RWPE1 (cell line): ENCODE measurements at regions of chr1 and their contacts with region 1.

Region 1: GRCh38 chr1:42576935-42577334 is 81.3 kb upstream of the PPIH start:
- DNase-seq: no peak
- H3K27ac ChIP-seq: no peak overlapping the region
- CTCF ChIP-seq: no peak

Region 2: DNA sequence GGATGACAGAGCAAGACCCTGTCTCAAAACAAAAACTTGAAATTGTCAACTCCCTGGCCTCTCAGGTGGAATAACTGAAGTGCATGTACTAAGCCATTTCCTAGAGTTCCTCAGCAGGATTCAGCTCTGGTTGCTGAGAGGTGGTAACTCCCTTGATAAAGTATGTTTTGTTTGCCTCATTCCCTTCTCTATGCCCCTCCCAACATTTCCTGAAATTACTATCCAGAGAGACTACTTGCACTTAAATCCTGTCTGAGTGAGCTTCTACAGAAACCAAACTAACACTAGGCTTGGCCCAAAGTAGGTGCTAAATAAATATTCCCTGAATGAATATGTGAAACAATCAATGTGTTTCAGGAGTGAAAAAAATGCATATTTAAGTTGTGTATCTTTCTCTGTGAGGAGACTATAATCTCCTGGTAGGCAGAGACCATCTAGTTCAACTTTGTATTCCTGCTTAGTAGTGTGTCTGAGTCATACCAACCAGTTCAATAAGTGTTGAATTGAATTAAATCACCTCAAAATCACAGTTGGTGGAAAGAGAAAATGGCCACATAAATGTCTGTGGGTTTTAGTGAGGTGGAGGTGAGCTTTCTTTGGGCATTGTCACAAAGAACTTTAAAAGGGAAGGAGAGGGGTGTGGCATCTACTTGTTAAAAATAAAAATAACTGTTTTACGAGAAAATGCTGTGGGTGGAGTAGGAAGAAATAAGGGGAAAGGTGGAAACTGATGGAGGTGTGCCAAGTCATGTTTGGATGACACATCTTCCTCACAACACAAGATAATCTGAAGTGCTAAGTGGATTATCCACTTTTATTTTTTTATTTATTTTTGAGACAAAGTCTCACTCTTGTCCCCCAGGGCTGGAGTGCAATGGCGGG is 183.7 kb before region 1 on chr1:
- CTCF ChIA-PET with region 1: no interaction called
- POLR2A ChIA-PET with region 1: no interaction called
- DNase-seq: no peak
- H3K27ac ChIP-seq: no peak overlapping the region
- CTCF ChIP-seq: no peak

Region 3: DNA sequence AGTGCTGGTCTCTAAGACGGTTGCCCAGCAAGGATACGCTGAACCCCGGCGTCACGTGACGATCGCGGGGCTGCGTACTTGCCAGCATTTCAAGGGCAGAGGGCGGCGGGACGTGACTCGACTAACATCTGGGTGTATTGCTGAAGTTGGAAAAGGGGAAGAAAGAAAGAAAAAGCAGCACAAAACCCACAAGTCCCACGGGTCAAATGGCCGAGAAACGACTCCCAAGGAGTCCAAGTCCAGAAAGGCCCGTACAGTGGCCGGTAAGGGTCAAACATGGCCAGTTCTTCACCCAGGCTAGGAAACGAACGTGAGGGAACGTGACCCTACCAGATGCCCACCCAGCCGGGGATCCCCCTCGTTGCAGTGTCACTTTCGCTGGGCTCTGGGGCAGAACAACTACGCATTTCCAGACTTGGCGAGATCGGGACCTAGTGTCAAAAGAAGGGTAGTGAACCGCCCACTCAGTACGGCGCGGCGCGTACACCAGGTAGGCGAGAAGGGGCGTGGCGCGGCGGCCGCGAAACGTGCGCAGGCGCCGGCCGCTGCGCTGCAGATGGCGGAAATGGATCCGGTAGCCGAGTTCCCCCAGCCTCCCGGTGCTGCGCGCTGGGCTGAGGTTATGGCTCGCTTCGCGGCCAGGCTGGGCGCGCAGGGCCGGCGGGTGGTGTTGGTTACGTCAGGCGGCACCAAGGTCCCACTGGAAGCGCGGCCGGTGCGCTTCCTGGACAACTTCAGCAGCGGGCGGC is 120.8 kb before region 1 on chr1 and contains the starts of genes PPCS and ZMYND12:
- CTCF ChIA-PET with region 1: no interaction called
- POLR2A ChIA-PET with region 1: no interaction called
- DNase-seq: peak; percentile 78
- H3K27ac ChIP-seq: peak within 1 kb of the TSS; percentile 86
- CTCF ChIP-seq: no peak

Region 4: GRCh38 chr1:42639116-42639515 is 62.2 kb after region 1 on chr1:
- CTCF ChIA-PET with region 1: interaction called, 11 read pairs
- POLR2A ChIA-PET with region 1: no interaction called
- DNase-seq: no peak
- H3K27ac ChIP-seq: no peak overlapping the region
- CTCF ChIP-seq: no peak